ENCODE measurements at regions of chr2 and their contacts with region 1.

Region 1: GRCh38 chr2:1653956-1654695 is 90.2 kb downstream of the PXDN start:
- DNase-seq: peak in 1 of 2 donors; percentile 56
- H3K4me3 ChIP-seq: no peak overlapping the region
- H3K27ac ChIP-seq: peak overlapping the region; percentile 74
- H3K4me1 ChIP-seq: peaks cover 21% of the 10 kb centered on the region
- H3K27me3 ChIP-seq: no peaks in the 10 kb centered on the region
- CTCF ChIP-seq: no peak
- POLR2A ChIP-seq: no peak

Region 2: GRCh38 chr2:1742681-1743395 is 88.7 kb after region 1 on chr2:
- intact Hi-C with region 1: loop called (anchors 5 kb)
- DNase-seq: peak in 1 of 2 donors; percentile 90
- H3K4me3 ChIP-seq: peak overlapping the region; percentile 72 to 88
- H3K27ac ChIP-seq: peak overlapping the region; percentile 90
- H3K4me1 ChIP-seq: peaks cover 27% of the 10 kb centered on the region
- H3K27me3 ChIP-seq: no peaks in the 10 kb centered on the region
- CTCF ChIP-seq: peak in 1 of 3 experiments; percentile 1
- POLR2A ChIP-seq: no peak

Region 3: DNA sequence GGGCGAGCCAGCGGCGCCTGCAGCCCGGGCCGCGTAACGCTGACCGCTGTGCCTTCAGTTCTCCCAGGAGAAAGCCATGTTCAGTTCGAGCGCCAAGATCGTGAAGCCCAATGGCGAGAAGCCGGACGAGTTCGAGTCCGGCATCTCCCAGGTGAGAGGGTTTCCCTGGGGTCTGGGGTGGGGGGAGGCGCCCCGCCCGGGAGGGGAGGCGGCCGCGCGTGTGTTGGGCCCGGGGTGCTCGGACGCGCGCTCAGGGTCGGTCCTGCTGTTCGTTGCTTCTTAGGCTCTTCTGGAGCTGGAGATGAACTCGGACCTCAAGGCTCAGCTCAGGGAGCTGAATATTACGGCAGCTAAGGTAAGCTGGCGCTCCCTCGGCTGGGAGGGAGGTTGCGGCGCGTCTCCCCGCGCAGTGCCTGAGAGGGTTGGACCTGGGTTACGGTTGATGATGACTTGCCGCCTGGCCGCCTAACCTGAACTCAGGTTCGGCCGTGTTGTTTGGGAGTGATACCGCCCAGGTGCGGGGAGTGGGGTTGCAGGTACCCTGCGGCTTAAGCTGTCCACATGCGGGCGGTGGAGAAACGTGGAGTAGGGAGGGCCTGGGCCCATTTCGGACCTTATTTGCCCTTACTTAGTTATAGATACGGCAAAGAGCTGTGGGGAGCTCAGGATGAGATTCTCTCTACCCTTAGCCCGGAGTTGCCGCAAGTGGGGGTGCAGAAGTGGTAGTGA is 1921.6 kb after region 1 on chr2:
- intact Hi-C with region 1: loop called (anchors 10 kb)
- DNase-seq: no peak
- H3K4me3 ChIP-seq: peak overlapping the region; percentile 85 to 95
- H3K27ac ChIP-seq: peak overlapping the region; percentile 91
- H3K4me1 ChIP-seq: peaks cover 50% of the 10 kb centered on the region
- H3K27me3 ChIP-seq: no peaks in the 10 kb centered on the region
- CTCF ChIP-seq: no peak
- POLR2A ChIP-seq: no peak